ENCODE measurements at regions of chr11 and their contacts with region 1.

Region 1: DNA sequence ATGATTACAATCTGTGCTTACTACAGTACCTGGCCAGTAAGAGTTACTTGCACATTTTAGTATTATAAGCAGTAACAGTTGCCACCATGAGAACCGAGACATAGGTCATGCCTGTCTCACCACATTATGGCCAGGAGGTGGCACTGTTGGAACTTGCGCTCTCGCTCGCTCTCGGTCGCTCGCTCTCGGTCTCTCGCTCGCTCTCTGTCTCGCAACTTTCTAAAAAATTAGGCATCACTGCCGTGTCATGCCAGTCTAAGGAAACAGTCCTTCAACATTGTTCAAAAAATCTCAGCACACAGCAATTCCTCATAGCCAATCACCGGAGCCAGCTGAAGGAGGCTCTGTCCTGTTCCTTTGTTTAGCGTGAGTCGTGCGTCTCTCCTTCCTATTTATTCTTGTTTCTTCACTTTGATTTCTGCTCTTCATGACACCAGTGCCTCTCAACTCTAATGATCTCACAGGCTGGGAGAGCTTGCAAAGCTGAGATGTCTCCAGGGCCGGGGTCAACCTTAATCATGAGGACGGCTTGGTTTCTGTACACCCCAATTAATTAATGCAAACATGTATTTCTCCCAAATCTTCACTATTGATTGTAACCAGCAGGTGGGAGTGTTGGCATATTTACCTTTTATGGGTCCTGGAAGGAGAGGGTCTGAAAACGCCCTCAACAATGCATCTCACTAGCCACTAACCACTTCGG is 6.3 kb upstream of the ADAMTS8 start:
- DNase-seq: peak; percentile 79
- H3K4me3 Mint-ChIP-seq: no peak overlapping the region
- H3K27ac Mint-ChIP-seq: no peak overlapping the region
- H3K4me1 Mint-ChIP-seq: peaks cover 24% of the 10 kb centered on the region
- H3K27me3 Mint-ChIP-seq: peaks cover 58% of the 10 kb centered on the region

Region 2: DNA sequence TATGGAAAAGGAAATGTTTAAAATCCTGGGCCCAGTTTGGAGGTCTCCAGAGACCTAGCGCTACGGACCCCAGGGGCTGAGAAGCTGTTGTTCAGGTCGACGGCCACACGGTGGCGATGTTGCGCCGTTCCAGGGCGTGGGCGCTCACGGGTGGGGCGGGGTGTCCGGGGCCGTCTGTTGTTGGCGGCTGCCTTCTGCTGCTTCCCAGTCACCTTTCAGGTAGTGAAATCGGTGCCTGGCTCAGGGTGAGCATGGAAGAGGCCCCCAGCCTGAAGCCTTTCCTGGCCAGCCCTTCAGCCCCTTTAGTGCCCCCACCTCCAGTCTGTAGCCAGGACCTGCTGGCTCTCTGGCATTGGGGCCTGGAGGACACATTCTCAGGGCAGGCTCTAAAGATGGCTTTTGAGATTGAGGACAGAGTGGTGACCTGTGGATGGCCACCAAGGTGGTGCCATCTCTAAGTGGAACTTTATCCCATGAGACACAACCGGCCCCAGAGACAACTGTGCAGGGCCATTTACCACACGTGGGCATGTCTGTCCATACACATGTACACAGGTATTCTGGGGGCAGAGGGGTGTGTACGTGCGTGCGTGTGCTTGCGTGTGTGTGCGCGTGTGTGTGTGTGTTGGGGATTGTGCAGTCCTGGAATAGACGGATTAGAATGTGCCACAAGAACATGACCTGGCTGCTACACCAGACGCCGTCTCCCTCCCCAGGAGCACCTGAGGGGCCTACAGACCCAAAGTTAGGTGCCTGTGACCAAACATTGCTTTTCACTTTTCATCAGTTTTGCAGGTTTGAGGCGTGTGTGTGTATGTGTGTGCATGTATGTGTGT is 221.3 kb before region 1 on chr11:
- CTCF ChIA-PET with region 1: interaction called, 21 read pairs
- DNase-seq: peak; percentile 75
- H3K4me3 Mint-ChIP-seq: no peak overlapping the region
- H3K27ac Mint-ChIP-seq: no peak overlapping the region
- H3K4me1 Mint-ChIP-seq: peaks cover 2% of the 10 kb centered on the region
- H3K27me3 Mint-ChIP-seq: peaks cover 26% of the 10 kb centered on the region

Region 3: GRCh38 chr11:130314750-130315285 is 119.9 kb before region 1 on chr11 and contains the start of gene ZBTB44:
- CTCF ChIA-PET with region 1: no interaction called
- DNase-seq: peak; percentile 92
- H3K4me3 Mint-ChIP-seq: peak within 1 kb of the TSS; percentile 84
- H3K27ac Mint-ChIP-seq: peak within 1 kb of the TSS; percentile 98
- H3K4me1 Mint-ChIP-seq: peaks cover 39% of the 10 kb centered on the region
- H3K27me3 Mint-ChIP-seq: peaks cover 4% of the 10 kb centered on the region

Region 4: DNA sequence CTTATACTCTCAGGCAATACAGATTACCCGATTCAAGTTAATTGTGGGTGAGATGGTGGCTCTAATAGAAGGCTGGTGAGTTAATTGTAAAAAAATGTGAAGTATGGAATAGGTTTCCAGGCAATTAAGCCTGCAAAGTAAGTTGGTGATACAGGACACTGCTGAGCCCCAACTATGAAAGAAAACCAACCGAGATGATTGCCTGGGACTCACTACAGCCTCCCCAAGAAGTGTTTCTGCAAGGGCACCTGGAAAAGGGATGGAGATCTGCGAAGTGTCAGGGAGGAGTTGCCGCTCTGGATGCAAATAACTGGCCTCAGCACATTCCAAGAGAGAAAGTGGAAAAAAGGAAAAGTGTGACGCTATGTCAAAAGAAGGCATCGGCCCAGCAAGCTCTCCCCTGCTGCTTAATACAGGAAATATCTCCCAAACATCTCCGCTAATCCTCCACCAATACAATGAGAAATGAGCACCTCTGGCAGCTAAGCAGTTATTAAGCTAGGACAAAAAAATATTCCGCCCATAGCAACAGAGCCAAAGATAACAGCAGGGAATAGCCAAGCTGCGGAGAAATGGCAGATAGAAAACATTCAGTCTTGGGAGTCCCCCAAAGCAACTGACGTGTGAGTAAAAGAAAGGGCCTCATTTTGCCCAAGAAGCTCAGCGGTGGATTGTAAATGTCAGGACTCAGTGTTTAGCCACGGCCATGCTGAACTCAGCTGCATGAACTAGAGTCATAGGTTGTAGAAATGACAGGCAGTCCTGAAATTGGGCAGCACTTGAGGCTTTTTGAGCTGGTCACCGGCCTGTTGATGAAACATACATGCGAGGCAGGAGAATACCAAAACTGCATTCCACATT is 347.9 kb after region 1 on chr11:
- CTCF ChIA-PET with region 1: no interaction called
- DNase-seq: no peak
- H3K4me3 Mint-ChIP-seq: no peak overlapping the region
- H3K27ac Mint-ChIP-seq: no peak overlapping the region
- H3K4me1 Mint-ChIP-seq: no peaks in the 10 kb centered on the region
- H3K27me3 Mint-ChIP-seq: no peaks in the 10 kb centered on the region

Region 5: DNA sequence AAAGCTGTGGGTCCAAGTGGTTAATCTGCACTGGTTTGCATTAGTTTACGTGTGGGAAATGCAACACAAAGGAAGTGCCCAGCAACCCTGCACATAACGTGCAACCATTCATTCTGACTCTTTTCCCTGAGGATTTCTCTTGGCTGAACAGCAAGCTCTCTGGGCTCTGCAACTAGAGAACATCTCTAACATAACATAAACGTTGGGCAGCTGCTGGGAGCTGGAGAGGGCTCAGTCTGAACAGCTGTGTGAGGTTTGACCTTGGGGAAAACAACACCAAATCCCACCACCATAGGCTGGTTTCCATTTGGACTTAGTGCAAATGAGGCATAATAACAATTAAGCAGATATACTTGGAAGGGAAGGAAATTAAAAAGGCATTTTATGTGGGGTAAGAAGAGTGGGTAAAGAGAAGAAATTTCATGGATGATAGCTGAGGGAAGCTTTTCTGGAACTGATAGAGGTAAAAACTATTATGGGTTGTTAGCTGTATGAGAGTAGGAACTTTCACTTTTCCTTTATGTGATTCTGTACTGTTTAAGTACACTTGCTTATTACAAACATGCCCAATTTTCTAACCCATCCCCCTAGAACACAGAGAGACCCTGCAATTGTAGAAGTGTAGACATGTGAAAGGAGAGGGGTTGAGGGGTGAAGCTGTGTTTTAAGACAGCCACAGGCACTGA is 405.5 kb after region 1 on chr11:
- CTCF ChIA-PET with region 1: interaction called, 12 read pairs
- DNase-seq: no peak
- H3K4me3 Mint-ChIP-seq: no peak overlapping the region
- H3K27ac Mint-ChIP-seq: no peak overlapping the region
- H3K4me1 Mint-ChIP-seq: no peaks in the 10 kb centered on the region
- H3K27me3 Mint-ChIP-seq: peaks cover 21% of the 10 kb centered on the region

Region 6: DNA sequence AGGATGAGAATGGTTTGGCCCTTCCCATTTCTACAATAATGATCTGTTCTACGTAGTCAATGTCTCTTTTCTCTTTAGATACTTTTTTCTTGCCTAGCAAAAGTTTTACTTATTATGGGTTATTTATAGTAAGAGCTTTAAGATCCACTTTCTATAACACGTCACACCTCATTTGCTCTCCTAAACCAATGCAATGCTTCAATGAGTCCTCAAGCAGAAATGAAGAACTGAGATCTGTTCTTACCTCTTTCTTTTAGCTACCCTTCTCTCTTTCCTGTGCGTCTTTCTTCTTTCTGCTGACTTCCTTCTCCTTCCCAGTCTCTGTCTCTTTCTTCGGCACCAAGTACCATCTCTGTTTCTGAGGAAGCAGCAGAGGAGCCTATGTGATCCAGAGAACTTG is 419.8 kb after region 1 on chr11:
- CTCF ChIA-PET with region 1: interaction called, 270 read pairs
- DNase-seq: no peak
- H3K4me3 Mint-ChIP-seq: no peak overlapping the region
- H3K27ac Mint-ChIP-seq: no peak overlapping the region
- H3K4me1 Mint-ChIP-seq: no peaks in the 10 kb centered on the region
- H3K27me3 Mint-ChIP-seq: peaks cover 6% of the 10 kb centered on the region

Region 7: GRCh38 chr11:130872981-130873380 is 438.3 kb after region 1 on chr11:
- CTCF ChIA-PET with region 1: interaction called, 11 read pairs
- DNase-seq: no peak
- H3K4me3 Mint-ChIP-seq: no peak overlapping the region
- H3K27ac Mint-ChIP-seq: no peak overlapping the region
- H3K4me1 Mint-ChIP-seq: no peaks in the 10 kb centered on the region
- H3K27me3 Mint-ChIP-seq: no peaks in the 10 kb centered on the region

Region 8: DNA sequence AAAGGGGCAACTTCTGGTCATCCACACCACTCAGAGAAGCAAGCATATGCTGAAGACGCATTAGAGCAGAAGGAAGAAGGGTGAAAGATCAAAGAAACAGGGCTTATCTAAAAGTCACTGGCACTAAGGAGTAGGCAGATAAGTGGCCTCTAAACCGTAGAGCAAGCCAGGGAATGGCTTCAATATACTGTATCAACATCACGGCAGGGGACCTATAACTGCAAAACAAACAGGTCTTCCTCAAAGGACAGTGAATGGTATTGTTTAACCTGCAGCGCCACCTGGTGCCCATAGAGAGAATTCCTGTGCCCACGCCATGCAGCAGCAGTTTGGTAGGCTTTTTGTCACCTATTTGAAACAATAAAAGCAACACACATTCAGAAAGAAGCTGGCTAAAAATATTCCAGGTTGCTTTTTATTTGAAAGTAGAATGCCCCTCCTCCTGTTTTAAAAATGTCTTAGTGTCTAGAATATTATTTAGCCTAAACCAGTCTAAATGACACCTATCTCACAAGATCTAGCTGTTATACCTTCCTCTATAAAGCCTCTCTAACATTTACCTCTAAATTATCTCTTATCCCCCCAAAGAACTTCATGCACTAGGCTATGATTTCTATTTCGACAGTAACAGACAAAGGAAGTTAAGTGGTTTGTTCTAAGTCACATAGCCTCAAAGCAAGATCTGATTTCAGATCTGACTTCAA is 459.8 kb after region 1 on chr11:
- CTCF ChIA-PET with region 1: interaction called, 36 read pairs
- DNase-seq: peak; percentile 79
- H3K4me3 Mint-ChIP-seq: no peak overlapping the region
- H3K27ac Mint-ChIP-seq: no peak overlapping the region
- H3K4me1 Mint-ChIP-seq: no peaks in the 10 kb centered on the region
- H3K27me3 Mint-ChIP-seq: no peaks in the 10 kb centered on the region

Measured in activated naive CD4-positive, alpha-beta T cell treated with anti-CD3 and anti-CD28 coated beads, Interleukin-2, amount 10 ng/mL, durations not matched to agents 7 days and 5 days (primary cell).